GM10248 (cell line): ENCODE measurements at regions of chr15 and their contacts with region 1.

Region 1: DNA sequence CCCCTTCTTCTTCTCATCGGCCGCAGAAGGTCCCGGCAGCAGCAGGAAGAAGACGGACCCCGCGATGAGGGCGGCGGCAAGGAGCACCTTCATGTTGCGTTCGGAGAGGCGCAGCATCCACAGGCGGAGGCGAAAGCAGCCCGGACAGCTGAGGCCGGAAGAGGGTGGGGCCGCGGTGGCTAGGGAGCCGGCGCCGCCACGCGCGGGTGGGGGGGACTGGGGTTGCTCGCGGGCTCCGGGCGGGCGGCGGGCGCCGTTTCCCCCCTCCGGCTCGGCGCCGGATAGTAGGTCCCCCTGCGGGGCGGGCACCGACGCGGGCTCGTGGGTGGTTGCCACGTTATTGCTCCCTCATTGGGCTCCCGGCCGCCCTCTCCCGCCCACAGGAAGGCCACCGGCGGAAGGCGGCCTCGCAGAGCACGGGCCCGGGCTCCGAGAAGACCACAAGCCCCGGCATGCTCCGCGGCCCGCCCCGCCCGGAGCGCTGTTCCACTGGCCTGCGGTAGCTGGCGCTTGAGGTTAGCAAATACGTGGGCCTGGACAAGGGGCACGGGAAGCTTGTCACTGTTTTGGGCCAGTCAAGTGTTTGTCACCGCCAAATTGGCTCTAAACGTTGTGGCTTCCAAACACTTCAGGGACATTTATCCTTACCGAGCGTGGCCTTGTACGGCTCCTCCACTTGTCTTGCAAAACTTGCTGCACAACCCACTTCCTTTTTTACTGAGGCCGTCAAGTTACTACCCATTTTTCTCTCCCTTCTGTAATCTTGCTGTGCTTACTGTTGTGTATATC is at the start of gene PPIB:
- DNase-seq: peak; percentile 96
- CTCF ChIP-seq: peak; percentile 48

Region 2: GRCh38 chr15:63600616-63601025 is 562.4 kb before region 1 on chr15:
- CTCF ChIA-PET with region 1: no interaction called
- POLR2A ChIA-PET with region 1: no interaction called
- DNase-seq: peak; percentile 91
- CTCF ChIP-seq: peak; percentile 37

Region 3: GRCh38 chr15:64180235-64180837 is 17.3 kb after region 1 on chr15:
- CTCF ChIA-PET with region 1: interaction called, 15 read pairs
- POLR2A ChIA-PET with region 1: no interaction called
- DNase-seq: peak; percentile 54
- CTCF ChIP-seq: no peak